Psoas muscle (tissue), 8 donors: ENCODE measurements at regions of chr15 and their contacts with region 1.

Region 1: DNA sequence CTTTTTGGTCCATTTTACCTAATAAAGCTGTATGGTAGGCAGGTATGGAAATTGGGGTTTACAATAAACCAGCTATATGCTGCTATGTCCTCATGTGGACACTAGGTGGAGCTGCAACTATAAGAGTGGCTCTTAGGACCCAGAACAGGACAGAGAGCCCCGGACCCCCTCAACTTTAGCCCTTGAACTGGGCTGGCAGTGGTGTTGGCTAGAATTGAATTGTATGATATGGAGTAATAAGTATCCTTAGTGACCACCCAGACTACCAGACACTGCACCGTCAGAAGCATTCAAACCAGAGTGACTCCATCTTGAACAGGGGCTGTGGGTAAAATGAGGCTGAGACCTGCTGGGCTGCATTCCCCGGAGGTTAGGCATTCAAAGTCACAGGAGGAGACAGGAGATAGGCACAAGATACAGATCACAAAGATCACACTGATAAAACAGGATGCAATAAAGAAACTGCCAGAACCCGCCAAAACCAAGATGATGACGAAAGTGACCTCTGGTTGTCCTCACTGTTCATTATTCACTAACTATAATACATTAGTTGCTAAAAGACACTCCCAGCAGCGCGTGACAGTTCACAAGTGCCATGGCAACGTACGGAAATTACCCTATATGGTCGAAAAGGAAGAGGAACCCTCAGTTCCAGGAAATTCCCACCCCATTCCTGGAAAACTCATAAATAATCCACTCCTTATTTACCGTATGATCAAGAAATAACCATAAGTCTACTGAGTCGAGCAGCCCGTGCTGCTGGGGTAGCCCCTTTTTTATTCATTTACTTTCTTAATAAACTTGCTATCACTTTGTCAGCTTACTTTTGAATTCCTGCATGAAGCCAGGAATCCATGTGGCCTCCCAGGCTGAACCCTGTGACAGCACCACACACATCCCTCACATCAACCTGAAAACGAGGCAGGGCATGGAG is 68.7 kb upstream of the BLM start:
- DNase-seq: peak; percentile 59 to 67
- ATAC-seq: peak; percentile 77 to 86 (median 80)
- H3K4me3 ChIP-seq: no peak overlapping the region
- H3K27ac ChIP-seq: peak overlapping the region; percentile 60
- H3K4me1 ChIP-seq: no peaks in the 10 kb centered on the region
- H3K27me3 ChIP-seq: no peaks in the 10 kb centered on the region
- CTCF ChIP-seq: peak; percentile 94

Region 2: DNA sequence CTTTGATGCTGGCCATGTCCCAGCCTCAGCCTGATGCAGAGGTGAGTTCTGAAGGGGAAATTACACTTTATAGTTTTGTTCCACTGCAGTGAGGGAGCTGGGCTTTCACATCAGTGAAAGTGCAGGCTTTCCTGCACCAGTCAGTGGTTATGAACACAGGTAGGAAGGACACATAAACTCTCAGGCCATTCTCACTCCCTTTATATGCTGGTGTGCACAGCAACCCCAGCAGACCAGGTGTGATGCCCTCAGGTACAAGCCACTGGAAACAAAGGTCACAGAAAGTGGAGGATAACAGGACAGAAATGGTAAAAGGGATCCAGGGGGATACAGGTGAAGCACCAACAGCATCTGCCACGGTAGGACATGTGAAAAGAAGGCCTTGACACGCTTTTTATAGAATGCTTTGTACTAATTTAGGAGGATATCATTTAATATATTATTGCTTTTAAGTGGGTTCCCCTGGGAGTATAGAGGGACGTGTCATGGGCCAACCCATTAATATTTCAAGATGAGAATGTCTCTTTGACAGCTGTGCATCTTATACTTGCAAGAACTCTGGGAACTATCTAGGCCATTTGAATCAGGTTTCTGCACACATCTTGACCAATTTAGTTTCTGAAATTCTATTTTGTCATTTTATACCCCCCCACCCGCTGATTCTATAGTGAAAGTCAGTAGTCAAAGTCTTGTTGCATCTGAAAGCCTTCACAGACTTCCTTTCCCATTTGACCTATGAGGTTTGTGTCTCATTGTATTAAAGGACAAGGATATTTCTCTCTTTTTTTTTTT is 43.8 kb after region 1 on chr15:
- intact Hi-C with region 1: loop called (anchors 1 to 2 kb)
- DNase-seq: no peak
- ATAC-seq: no peak
- H3K4me3 ChIP-seq: no peak overlapping the region
- H3K27ac ChIP-seq: no peak overlapping the region
- H3K4me1 ChIP-seq: no peaks in the 10 kb centered on the region
- H3K27me3 ChIP-seq: no peaks in the 10 kb centered on the region
- CTCF ChIP-seq: no peak

Region 3: GRCh38 chr15:90931737-90932659 is 283.6 kb after region 1 on chr15 and contains the start of gene HDDC3:
- intact Hi-C with region 1: loop called in 1 of 2 experiments (anchors 2 kb)
- DNase-seq: peak; percentile 95
- ATAC-seq: peak; percentile 65 to 72 (median 70)
- H3K4me3 ChIP-seq: peak within 1 kb of the TSS; percentile 95
- H3K27ac ChIP-seq: peak within 1 kb of the TSS; percentile 95
- H3K4me1 ChIP-seq: peaks cover 40% of the 10 kb centered on the region
- H3K27me3 ChIP-seq: no peaks in the 10 kb centered on the region
- CTCF ChIP-seq: peak; percentile 94
- total RNA-seq, gene HDDC3: 9.9 to 25.5 (median 12.9) TPM

Region 4: GRCh38 chr15:91113030-91113429 is 464.6 kb after region 1 on chr15:
- intact Hi-C with region 1: no loop called
- DNase-seq: no peak
- ATAC-seq: no peak
- H3K4me3 ChIP-seq: no peak overlapping the region
- H3K27ac ChIP-seq: no peak overlapping the region
- H3K4me1 ChIP-seq: no peaks in the 10 kb centered on the region
- H3K27me3 ChIP-seq: peaks cover 0 to 6% (median 4%) of the 10 kb centered on the region in 3 donors
- CTCF ChIP-seq: no peak